Activated CD4-positive, alpha-beta T cell treated with anti-CD3 and anti-CD28 coated beads for 36 hours (primary cell): ENCODE measurements at regions of chr7 and their contacts with region 1.

Region 1: DNA sequence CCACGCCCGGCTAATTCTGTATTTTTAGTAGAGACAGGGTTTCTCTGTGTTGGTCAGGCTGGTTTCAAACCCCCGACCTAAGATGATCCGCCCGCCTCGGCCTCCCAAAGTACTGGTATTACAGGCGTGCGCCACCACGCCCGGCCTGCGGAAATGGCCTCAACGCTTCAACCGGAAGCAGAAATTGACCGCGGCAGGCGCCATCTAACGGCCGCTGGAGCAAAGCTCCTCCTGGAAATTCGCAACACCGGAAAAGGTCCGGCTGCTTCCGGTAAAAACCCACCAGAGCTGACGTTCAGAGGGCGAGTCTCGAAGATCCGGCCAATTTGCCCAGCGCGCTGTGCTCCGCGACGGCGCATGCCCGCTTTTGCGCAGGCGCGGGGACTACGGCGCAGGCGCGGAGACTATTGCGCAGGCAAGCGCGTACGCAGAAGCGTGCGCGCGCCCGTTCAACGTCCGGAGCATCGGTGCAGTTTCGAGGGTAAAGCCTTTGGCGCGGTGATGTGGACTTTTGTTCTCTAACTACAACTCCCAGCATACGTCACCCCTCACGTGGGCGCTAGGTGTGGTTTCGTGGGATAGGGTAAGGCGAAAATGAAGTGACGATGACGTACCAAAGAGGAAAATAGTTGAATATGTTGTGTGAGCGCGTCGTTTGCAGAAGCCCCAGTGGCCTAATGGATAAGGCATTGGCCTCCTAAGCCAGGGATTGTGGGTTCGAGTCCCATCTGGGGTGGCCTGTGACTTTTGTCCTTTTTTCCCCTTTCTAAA is 915 bp upstream of the FMC1 start:
- DNase-seq: peak; percentile 99
- ATAC-seq: peak; percentile 79
- H3K4me3 Mint-ChIP-seq: peak overlapping the region; percentile 97
- H3K27ac Mint-ChIP-seq: peak overlapping the region; percentile 99
- H3K4me1 Mint-ChIP-seq: peaks cover 23% of the 10 kb centered on the region
- H3K27me3 Mint-ChIP-seq: peaks cover 2% of the 10 kb centered on the region

Region 2: DNA sequence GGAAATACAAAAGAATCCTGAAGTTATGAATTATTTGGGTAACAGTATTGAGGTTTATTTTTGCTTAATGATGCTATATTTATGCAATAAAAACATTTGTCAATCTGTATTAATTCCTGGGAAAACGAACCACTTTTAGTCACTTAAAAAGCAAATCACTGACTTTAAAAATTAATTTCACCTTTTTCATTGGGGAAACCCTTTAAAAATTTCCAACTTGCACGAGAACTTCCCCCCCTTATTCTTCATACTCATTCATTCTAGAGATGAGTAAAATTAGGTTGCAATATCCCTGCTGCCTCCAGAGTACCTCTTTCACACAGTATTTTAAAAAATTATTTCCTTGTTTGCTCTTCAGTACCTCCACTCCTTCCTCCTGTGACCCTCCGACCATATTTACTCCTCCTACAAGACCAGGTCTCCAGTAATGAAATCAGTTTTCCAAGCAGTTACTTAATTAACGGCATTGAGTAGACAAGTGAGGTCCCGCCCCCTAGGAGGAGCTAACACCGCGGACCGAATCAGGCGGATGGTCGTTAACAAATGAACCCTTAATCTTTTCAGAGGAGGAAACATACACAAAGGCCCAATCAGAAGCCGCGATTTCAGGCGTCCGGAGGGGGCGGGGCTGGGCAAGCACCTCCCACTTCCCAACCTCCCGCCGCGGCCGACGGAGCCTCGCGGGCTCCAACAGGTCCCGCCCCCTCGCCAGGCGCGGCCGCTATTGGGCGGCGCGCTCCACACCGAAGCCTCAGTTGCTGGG is 880.6 kb before region 1 on chr7:
- CTCF ChIA-PET with region 1: no interaction called
- POLR2A ChIA-PET with region 1: no interaction called
- intact Hi-C with region 1: loop called in 1 of 2 experiments (anchors 5 kb)
- DNase-seq: peak; percentile 99
- ATAC-seq: peak; percentile 88
- H3K4me3 Mint-ChIP-seq: peak overlapping the region; percentile 85
- H3K27ac Mint-ChIP-seq: peak overlapping the region; percentile 85
- H3K4me1 Mint-ChIP-seq: peaks cover 25% of the 10 kb centered on the region
- H3K27me3 Mint-ChIP-seq: no peaks in the 10 kb centered on the region

Region 3: GRCh38 chr7:139095194-139095659 is 245.0 kb before region 1 on chr7:
- CTCF ChIA-PET with region 1: interaction called, 3 read pairs
- POLR2A ChIA-PET with region 1: no interaction called
- intact Hi-C with region 1: loop called in 1 of 2 experiments (anchors 1 kb)
- DNase-seq: peak; percentile 80
- ATAC-seq: peak; percentile 88
- H3K4me3 Mint-ChIP-seq: peak overlapping the region; percentile 70
- H3K27ac Mint-ChIP-seq: peak overlapping the region; percentile 92
- H3K4me1 Mint-ChIP-seq: peaks cover 89% of the 10 kb centered on the region
- H3K27me3 Mint-ChIP-seq: no peaks in the 10 kb centered on the region

Region 4: DNA sequence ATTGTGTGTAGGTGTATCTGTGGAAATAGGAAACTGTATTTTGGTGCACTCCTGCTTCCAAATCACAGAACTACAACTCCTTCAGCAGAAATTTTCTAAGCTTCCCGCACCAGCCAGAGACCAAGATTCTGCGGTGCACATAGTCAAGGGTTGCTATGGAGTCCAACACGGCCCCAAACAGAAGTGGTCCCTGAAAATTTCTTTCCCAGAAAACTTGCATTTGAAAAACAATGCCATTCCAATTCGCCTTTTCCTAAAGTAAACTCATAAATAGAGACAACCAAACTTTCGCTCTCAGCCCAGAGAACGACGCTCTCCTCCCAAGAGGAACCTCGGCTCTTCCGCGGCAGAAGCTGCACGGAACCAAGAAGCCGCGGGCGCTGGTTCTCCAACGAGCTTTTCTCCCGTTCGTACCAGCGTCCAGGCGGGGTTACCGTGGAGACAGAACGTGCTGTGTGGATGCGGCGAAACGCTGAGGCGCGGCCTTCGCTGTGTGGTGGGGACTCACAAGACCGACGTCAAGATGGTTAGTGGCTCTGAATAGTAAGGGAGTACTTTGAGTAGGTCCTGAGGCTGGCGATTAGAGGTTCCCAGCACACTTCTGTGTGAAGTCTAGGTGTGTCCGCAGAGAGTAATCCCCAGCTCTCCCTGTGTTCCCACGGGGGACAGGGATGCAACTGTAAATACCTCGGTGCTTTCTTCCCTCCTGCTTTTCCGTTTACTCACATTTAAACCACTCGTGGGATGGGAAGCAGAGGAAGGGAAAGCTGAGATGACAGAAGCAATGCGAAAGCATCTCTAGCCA is 206.7 kb before region 1 on chr7:
- CTCF ChIA-PET with region 1: interaction called, 10 read pairs
- POLR2A ChIA-PET with region 1: no interaction called
- intact Hi-C with region 1: loop called in 1 of 2 experiments (anchors 1 kb)
- DNase-seq: peak; percentile 93
- ATAC-seq: peak; percentile 99
- H3K4me3 Mint-ChIP-seq: peak overlapping the region; percentile 74
- H3K27ac Mint-ChIP-seq: peak overlapping the region; percentile 71
- H3K4me1 Mint-ChIP-seq: peaks cover 21% of the 10 kb centered on the region
- H3K27me3 Mint-ChIP-seq: no peaks in the 10 kb centered on the region

Region 5: GRCh38 chr7:139602143-139602722 is 262.0 kb after region 1 on chr7:
- CTCF ChIA-PET with region 1: no interaction called
- POLR2A ChIA-PET with region 1: no interaction called
- intact Hi-C with region 1: no loop called
- DNase-seq: no peak
- ATAC-seq: peak; percentile 83
- H3K4me3 Mint-ChIP-seq: no peak overlapping the region
- H3K27ac Mint-ChIP-seq: no peak overlapping the region
- H3K4me1 Mint-ChIP-seq: no peaks in the 10 kb centered on the region
- H3K27me3 Mint-ChIP-seq: no peaks in the 10 kb centered on the region

Region 6: DNA sequence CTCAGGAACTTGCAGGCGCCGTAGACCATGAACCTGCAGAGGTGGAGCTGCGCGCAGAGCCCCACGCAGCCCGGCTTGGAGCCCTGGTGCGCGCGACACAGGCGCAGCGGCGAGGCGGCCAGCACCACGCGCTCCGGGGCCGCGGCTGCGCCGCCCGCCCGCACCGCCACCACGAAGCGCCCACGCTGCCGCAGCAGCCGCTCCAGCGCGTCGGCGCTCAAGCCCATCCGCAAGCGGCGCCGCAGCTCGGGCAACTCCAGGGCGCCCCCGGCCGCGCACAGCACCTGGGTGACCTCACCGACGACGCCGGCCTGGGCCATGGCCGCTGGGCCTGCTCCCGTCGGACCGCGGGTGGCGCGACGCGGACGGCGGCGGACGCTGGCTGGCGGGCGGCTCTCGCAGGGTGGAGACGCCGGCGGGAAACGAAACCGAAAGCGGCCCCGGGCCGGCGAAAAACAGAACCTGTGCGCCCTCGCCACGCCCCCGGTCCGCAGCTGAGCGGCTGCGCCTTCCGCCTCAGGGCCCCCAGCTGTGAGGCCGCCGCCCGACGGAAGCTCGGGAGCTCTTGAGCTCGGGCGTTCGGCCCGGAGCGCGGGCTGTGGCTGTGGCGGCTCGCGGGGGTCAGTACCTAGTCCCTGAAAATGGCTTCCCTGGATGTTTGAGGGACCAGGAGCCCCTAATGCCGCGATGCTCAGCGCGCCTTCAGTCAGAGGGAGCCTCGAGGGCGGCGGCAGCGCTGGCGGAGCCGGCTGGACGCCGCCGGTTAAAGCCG is 722.5 kb after region 1 on chr7 and contains the start of gene PARP12:
- CTCF ChIA-PET with region 1: no interaction called
- POLR2A ChIA-PET with region 1: no interaction called
- intact Hi-C with region 1: loop called in 1 of 2 experiments (anchors 5 kb)
- DNase-seq: peak; percentile 91
- ATAC-seq: peak; percentile 65
- H3K4me3 Mint-ChIP-seq: peak within 1 kb of the TSS; percentile 78
- H3K27ac Mint-ChIP-seq: peak within 1 kb of the TSS; percentile 75
- H3K4me1 Mint-ChIP-seq: peaks cover 36% of the 10 kb centered on the region
- H3K27me3 Mint-ChIP-seq: no peaks in the 10 kb centered on the region
- total RNA-seq, gene PARP12: 25.7 to 28.7 TPM

Region 7: DNA sequence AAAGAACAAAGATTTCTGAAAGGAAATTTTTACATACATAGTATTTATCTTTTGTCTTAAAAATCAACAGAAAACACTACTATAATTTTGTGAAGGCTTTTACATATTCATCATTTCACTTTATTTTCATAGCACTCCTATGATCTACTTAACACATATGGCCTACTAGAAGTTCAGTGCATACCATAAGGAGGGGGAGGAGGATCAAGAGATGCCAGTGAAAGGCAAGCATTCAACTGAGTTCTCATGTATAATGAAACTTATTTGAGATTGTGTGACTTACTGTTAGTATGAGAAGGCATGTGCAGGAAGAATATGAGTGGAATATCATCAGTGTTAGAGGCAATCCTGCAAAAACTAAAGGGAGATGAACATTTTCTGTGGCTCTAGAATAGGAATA is 1573.9 kb after region 1 on chr7:
- CTCF ChIA-PET with region 1: no interaction called
- POLR2A ChIA-PET with region 1: no interaction called
- intact Hi-C with region 1: loop called in 1 of 2 experiments (anchors 10 kb)
- DNase-seq: no peak
- ATAC-seq: peak; percentile 31
- H3K4me3 Mint-ChIP-seq: no peak overlapping the region
- H3K27ac Mint-ChIP-seq: no peak overlapping the region
- H3K4me1 Mint-ChIP-seq: peaks cover 65% of the 10 kb centered on the region
- H3K27me3 Mint-ChIP-seq: no peaks in the 10 kb centered on the region